ENCODE measurements at regions of chr22 and their contacts with region 1.

Region 1: GRCh38 chr22:26483439-26484359 is at the starts of genes HPS4 and SRRD:
- DNase-seq: peak; percentile 91 to 96 (median 94)
- H3K4me3 ChIP-seq: peak within 1 kb of the TSS; percentile 51 to 92
- H3K4me3 Mint-ChIP-seq: peak within 1 kb of the TSS; percentile 91 to 98 (median 92)
- H3K27ac ChIP-seq: peak within 1 kb of the TSS; percentile 95
- H3K27ac Mint-ChIP-seq: peak within 1 kb of the TSS; percentile 93 to 99 (median 99)
- H3K4me1 ChIP-seq: peaks cover 70% of the 10 kb centered on the region
- H3K4me1 Mint-ChIP-seq: peaks cover 50 to 79% (median 66%) of the 10 kb centered on the region in 4 donors
- H3K27me3 ChIP-seq: no peaks in the 10 kb centered on the region
- H3K27me3 Mint-ChIP-seq: no peaks in the 10 kb centered on the region
- total RNA-seq, gene HPS4: 54.0 to 59.7 TPM
- total RNA-seq, gene SRRD: 19.5 to 20.7 TPM

Region 2: GRCh38 chr22:26461188-26461810 is 22.4 kb before region 1 on chr22:
- CTCF ChIA-PET with region 1: interaction called, 17 read pairs
- POLR2A ChIA-PET with region 1: no interaction called
- intact Hi-C with region 1: no loop called
- DNase-seq: peak in 3 of 5 donors; percentile 17 to 22 (median 19)
- H3K4me3 ChIP-seq: no peak overlapping the region
- H3K4me3 Mint-ChIP-seq: no peak overlapping the region
- H3K27ac ChIP-seq: no peak overlapping the region
- H3K27ac Mint-ChIP-seq: peak overlapping the region in 1 of 7 donors; percentile 16
- H3K4me1 ChIP-seq: no peaks in the 10 kb centered on the region
- H3K4me1 Mint-ChIP-seq: peaks cover 0 to 5% (median 0%) of the 10 kb centered on the region in 4 donors
- H3K27me3 ChIP-seq: no peaks in the 10 kb centered on the region
- H3K27me3 Mint-ChIP-seq: no peaks in the 10 kb centered on the region

Region 3: GRCh38 chr22:26511857-26512793 is 28.4 kb after region 1 on chr22 and contains the start of gene TFIP11:
- CTCF ChIA-PET with region 1: interaction called, 3 read pairs
- POLR2A ChIA-PET with region 1: interaction called, 68 read pairs
- intact Hi-C with region 1: loop called (anchors 1 kb)
- DNase-seq: peak; percentile 83 to 90 (median 84)
- H3K4me3 ChIP-seq: peak within 1 kb of the TSS; percentile 83 to 90
- H3K4me3 Mint-ChIP-seq: peak within 1 kb of the TSS; percentile 99 to 100 (median 99)
- H3K27ac ChIP-seq: peak within 1 kb of the TSS; percentile 94
- H3K27ac Mint-ChIP-seq: peak within 1 kb of the TSS; percentile 95 to 100 (median 100)
- H3K4me1 ChIP-seq: peaks cover 21% of the 10 kb centered on the region
- H3K4me1 Mint-ChIP-seq: peaks cover 26 to 46% (median 40%) of the 10 kb centered on the region in 4 donors
- H3K27me3 ChIP-seq: no peaks in the 10 kb centered on the region
- H3K27me3 Mint-ChIP-seq: no peaks in the 10 kb centered on the region
- total RNA-seq, gene TFIP11: 72.7 to 74.5 TPM

Region 4: GRCh38 chr22:26658671-26659478 is 175.2 kb after region 1 on chr22:
- CTCF ChIA-PET with region 1: interaction called, 5 read pairs
- POLR2A ChIA-PET with region 1: interaction called, 25 read pairs
- intact Hi-C with region 1: loop called (anchors 2 kb)
- DNase-seq: peak; percentile 48 to 91 (median 61)
- H3K4me3 ChIP-seq: peak overlapping the region; percentile 90 to 95
- H3K4me3 Mint-ChIP-seq: peak overlapping the region; percentile 91 to 97 (median 94)
- H3K27ac ChIP-seq: peak overlapping the region; percentile 58
- H3K27ac Mint-ChIP-seq: peak overlapping the region; percentile 86 to 95 (median 90)
- H3K4me1 ChIP-seq: peaks cover 29% of the 10 kb centered on the region
- H3K4me1 Mint-ChIP-seq: peaks cover 19 to 42% (median 25%) of the 10 kb centered on the region in 4 donors
- H3K27me3 ChIP-seq: no peaks in the 10 kb centered on the region
- H3K27me3 Mint-ChIP-seq: no peaks in the 10 kb centered on the region